ENCODE measurements at regions of chr17 and their contacts with region 1.

Region 1: DNA sequence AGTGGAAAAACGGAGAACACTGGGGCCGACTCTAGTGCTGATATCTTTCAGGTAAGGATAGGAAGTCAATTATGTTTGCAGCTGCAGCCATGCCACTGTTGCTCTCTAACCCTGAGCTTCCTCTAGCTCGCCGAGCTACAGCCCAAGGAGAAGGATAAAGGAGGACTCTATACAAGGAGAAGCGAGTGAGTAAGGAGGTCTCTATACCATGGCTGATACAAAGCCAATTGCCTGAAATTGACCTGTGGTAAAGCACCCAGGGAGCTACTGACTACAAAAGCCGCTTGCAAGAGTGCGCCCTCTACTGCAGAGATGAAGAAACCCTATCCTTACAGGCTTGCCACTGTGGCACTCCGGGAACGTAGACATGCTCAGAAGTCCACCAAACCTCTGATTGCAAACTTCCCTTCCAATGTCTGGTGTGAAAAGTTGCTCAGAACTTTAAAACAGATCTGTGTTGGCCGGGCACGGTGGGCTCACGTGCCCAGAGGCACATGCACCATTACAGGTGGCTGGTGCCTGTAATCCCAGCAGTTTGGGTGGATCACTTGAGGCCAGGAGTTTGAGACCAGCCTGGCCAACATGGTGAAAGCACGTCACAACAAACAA is 10.8 kb upstream of the SLC46A1 start:
- H3K4me3 ChIP-seq: no peak overlapping the region
- H3K27ac ChIP-seq: no peak overlapping the region
- H3K4me1 ChIP-seq: no peaks in the 10 kb centered on the region
- CTCF ChIP-seq: peak; percentile 77

Region 2: DNA sequence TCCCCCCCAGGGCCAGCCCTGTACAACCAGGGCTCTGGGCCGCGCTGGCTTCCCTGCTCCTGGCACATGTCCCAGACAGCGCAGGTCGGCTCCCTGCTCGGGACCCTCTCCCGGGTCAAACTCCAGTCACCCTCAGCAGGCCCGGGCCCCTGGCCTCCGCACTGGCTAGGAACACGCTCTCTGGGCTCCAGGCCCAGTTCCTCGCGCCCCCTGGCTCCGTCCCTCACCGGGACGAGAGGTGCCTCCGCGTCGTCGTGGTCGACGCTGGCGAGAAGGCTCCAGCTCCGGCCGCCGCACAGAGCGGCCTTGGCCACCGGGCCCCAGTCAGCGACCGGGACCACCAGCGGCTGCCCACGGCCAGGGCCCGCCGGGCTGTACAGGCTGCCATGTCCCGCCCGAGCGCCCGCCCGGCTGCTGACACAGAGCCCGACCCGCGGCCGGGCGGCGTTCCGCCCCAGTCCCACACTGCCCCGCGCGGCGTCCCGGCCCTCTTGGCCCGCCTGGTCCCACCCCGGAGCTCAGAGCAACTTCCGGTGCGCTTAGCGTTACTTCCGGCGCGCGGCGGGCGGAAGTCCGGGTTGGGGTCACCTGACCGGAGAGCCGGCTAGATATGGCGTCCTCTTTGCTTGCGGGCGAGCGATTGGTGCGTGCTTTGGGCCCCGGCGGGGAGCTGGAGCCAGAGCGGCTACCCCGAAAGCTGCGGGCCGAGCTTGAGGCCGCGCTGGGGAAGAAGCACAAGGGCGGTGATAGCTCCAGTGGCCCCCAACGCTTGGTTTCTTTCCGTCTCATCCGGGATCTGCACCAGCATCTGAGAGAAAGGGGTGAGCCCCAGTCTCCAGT is 59.5 kb before region 1 on chr17 and contains the start of gene POLDIP2:
- CTCF ChIA-PET with region 1: interaction called, 21 read pairs
- POLR2A ChIA-PET with region 1: interaction called, 14 read pairs
- H3K4me3 ChIP-seq: peak within 1 kb of the TSS; percentile 90
- H3K27ac ChIP-seq: peak within 1 kb of the TSS; percentile 85
- H3K4me1 ChIP-seq: peaks cover 6% of the 10 kb centered on the region
- CTCF ChIP-seq: no peak

Region 3: DNA sequence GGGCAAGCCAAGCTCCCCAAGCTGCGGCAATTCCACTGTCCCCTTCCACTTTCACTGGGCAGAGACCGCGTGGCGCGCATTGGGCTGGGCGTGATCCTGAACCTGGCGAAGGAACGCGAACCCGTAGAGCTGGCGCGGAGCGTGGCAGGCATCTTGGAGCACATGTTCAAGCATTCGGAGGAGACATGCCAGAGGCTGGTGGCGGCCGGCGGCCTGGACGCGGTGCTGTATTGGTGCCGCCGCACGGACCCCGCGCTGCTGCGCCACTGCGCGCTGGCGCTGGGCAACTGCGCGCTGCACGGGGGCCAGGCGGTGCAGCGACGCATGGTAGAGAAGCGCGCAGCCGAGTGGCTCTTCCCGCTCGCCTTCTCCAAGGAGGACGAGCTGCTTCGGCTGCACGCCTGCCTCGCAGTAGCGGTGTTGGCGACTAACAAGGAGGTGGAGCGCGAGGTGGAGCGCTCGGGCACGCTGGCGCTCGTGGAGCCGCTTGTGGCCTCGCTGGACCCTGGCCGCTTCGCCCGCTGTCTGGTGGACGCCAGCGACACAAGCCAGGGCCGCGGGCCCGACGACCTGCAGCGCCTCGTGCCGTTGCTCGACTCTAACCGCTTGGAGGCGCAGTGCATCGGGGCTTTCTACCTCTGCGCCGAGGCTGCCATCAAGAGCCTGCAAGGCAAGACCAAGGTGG is 35.5 kb before region 1 on chr17:
- CTCF ChIA-PET with region 1: interaction called, 15 read pairs
- POLR2A ChIA-PET with region 1: interaction called, 3 read pairs
- H3K4me3 ChIP-seq: no peak overlapping the region
- H3K27ac ChIP-seq: no peak overlapping the region
- H3K4me1 ChIP-seq: peaks cover 2% of the 10 kb centered on the region; the same call in 1 of the 2 replicates
- CTCF ChIP-seq: no peak

Region 4: DNA sequence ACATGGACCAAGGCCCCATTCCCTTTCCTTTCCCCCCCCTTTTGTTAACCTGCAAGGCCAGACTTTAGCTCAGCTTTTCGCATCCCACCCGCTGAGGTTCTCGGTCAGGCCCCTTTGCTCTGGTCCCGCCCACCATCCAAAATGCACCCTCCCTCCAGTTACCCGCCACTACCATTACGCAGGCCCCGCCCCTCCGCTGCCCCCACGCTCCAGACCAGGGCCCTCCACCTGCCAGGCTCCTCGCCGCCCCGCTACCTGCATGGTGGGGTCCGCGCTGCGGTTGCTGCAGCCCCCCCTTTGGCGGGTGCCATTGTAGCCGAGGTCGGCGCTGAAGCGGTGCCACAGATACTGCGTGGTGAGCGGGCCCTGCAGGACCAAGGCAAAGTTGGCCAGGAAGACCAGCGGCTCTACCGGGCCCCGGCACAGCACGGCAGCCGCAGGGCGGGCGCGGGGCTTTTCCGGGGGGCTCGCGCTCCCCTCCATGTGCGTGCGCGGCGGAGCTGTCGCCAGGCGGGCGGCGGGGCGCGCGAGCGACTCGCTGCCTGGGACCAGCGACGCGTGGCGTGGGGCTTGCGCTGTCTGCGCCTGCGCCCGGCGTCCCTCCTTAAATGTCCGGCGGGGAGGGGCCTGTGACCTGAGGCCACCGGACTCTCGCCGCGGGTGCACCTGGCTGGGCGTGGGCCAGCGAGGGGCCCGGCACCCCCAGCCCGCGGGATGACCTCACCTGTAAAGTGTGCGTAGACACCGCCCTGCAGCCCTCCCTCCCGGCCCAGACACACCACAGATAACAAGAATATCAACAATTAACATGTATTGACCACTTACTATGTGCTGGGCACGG is 11.0 kb before region 1 on chr17 and contains the start of gene SLC46A1:
- CTCF ChIA-PET with region 1: interaction called, 41 read pairs
- POLR2A ChIA-PET with region 1: interaction called, 11 read pairs
- H3K4me3 ChIP-seq: peak within 1 kb of the TSS; percentile 80
- H3K27ac ChIP-seq: peak within 1 kb of the TSS; percentile 79; the same call in 1 of the 2 replicates
- H3K4me1 ChIP-seq: no peaks in the 10 kb centered on the region
- CTCF ChIP-seq: no peak

Region 5: DNA sequence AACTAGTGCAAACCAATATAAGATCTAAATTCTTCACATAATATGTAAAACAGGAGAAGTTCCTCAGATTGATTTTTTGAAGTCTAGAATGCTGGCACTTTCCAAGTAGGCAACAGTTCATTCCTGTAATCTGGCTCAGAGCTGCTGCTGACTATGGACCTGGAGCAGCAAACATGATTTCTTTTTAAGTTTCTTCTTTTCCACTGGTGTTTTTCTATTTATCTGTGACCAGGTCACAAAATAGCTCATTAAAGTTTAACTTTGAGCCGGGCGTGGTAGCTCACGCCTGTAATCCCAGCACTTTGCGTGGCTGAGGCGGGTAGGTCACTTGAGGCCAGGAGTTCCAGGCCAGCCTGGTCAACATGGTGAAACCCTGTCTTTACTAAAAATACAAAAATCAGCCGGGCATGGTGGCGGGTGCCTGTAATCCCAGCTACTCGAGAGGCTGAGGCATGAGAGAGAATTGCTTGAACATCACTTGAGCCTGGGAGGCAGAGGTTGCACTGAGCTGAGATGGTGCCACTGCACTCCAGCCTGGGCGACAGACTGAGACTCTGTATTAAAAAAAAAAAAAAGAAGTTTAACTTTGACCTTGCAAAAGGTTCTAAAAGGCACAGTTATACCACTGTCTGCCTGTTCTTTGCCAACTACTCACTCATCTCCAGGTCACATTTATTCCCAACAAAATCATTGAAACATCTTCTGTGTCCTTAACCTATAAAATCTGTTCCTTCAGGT is 27.3 kb after region 1 on chr17:
- CTCF ChIA-PET with region 1: interaction called, 12 read pairs
- POLR2A ChIA-PET with region 1: no interaction called
- H3K4me3 ChIP-seq: no peak overlapping the region
- H3K27ac ChIP-seq: no peak overlapping the region
- H3K4me1 ChIP-seq: no peaks in the 10 kb centered on the region
- CTCF ChIP-seq: no peak

Measured in HEK293 (cell line).